Head of caudate nucleus (tissue), 42 donors: ENCODE measurements at regions of chr1 and their contacts with region 1.

Region 1: GRCh38 chr1:115138968-115139367 is 49.7 kb upstream of the TSPAN2 start:
- DNase-seq: peak; percentile 65 to 91 (median 78)

Region 2: GRCh38 chr1:115463363-115463746 is 324.4 kb after region 1 on chr1:
- intact Hi-C with region 1: loop called (anchors 5 kb)
- DNase-seq: peak in 1 of 42 donors; percentile 33

Region 3: DNA sequence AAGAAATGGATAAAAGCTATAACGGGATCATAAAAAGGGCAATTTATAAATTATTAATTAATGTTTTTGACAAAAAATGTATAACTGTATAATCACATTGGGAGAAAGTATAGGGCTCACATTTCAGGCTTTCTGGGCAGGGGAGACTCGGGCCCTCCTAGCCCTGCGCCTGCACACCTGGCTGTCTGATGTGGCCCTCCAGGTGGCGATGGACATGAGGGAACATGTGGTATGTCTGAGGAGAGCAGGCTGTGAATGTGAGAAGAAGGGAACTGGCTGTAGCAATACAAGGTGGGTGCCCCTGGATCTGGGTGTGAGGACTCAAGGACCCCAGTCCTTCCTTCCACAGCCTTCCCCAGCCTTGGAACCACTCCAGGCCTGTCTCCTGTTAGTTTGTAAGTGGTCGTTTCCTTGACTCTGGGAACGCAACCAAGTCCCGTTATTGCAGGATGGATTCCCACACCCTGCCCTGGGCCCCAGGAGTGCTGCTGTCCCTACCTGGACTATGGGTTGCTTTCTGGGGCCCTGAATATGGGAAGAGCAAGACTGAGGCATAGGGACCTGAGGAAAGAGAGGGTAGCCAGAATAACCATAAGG is 455.5 kb after region 1 on chr1:
- intact Hi-C with region 1: loop called (anchors 5 kb)
- DNase-seq: no peak